ENCODE measurements at regions of chr10 and their contacts with region 1.

Region 1: DNA sequence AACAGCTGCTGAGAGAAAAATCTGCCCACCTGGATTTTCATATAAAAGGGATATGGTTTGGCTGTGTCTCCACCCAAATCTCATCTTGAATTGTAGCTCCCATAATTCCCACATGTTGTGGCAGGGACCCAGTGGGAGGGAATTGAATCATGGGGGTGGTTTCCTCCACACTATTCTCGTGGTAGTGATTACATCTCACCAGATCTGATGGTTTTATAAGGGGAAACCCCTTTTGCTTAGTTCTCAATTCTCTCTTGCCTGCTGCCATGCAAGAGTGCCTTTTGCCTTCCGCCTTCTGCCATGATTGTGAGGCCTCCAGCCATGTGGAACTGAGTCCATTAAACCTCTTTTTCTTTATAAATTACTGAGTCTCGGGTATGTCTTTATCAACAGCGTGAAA is 20.8 kb upstream of the MKI67 start:
- DNase-seq: no peak
- H3K4me3 ChIP-seq: no peak overlapping the region
- H3K27ac ChIP-seq: no peak overlapping the region
- H3K4me1 ChIP-seq: no peaks in the 10 kb centered on the region
- H3K27me3 ChIP-seq: no peaks in the 10 kb centered on the region
- CTCF ChIP-seq: no peak

Region 2: DNA sequence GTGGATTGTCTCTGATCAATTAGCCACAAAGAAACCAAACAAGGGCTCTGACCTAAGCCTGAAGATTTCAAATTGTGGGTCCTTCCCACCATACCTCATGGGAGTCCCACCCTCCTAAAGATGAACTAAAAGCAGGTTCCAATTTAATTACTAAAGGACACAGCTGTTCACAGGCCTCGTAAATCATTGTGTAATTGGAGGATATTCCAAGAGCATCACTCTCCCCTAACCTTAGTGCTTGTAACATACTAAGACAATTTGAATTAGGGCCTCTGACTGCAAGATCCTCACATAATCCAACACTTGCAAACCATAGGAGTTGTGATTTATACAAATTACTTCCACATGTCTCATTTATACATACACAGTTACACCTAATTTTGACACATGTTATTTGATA is 365.7 kb before region 1 on chr10:
- intact Hi-C with region 1: no loop called
- DNase-seq: no peak
- H3K4me3 ChIP-seq: no peak overlapping the region
- H3K27ac ChIP-seq: no peak overlapping the region
- H3K4me1 ChIP-seq: no peaks in the 10 kb centered on the region
- H3K27me3 ChIP-seq: no peaks in the 10 kb centered on the region
- CTCF ChIP-seq: no peak

Region 3: DNA sequence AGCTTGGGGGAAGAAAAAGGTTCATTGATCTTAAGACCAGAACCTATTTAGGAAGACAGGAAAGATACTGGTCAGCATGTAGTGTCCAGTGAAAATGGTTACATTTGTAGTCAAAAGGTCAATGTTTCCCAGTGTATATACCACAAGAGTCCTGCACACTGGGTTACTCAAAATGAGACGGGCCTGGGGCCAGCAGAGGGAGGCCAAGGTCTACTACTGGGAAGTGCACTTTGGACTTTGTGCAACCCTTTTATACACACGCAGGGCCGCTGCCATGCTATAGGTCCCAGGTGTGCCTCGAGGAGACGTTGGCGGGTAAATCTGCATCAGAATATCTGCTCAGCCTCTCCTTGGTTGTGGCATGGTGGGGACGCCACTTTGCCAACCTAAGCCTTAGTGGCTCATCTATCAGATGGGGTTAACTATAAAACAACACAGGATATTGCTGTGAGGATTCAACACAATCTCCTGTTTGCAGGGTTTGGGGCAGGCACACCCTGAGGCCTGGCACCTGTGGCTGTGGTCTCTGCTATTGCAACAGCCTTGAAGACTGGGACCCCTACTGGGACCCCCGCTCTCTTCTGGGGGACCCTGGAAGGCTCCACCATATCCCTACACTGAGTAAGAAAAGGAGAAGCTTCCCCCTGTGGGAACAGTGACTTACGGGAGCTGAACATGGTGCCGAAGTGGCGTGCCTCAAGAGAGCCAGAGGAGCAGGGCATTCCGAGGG is 274.0 kb before region 1 on chr10:
- intact Hi-C with region 1: loop called (anchors 10 kb)
- DNase-seq: peak; percentile 85
- H3K4me3 ChIP-seq: no peak overlapping the region
- H3K27ac ChIP-seq: no peak overlapping the region
- H3K4me1 ChIP-seq: no peaks in the 10 kb centered on the region
- H3K27me3 ChIP-seq: no peaks in the 10 kb centered on the region
- CTCF ChIP-seq: peak; percentile 59

Region 4: DNA sequence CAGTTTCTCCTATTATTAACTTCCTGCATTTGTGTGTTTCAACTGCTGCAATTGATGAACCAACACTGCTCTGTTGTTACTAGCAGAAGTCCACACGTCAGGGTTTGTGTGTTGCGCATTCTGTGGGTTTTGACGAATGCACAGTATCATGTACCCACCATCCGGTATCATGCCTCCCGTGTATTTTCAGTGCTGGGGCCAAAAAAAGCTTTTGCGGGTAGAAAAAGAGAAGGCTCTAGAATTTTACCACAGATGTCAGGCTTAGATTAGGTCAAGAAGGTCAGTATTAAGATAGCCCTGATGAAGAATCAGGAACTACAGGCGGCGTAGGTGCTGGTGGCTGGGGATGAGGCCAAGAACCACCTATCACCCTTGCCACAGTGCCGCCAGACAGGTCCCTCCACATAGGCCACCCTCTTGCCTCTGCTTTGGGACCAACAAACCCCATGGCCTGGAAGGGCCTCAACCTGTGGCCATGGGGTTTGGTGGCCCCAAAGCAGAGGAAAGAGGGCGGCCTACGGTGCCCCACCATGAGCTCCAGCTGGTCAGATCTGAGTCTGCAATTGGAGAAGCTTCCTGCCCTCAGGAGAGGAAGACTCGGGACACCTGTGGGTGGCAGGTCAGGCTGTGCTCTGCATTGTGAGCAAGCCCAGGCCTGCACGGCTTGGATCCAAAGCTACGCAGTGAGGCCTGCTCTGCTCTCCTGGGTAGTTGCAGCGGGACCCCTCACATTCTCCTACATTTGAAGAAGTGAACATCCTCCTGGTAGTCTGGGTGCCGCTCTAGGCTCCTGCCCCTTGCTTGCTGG is 92.7 kb before region 1 on chr10:
- intact Hi-C with region 1: no loop called
- DNase-seq: no peak
- H3K4me3 ChIP-seq: no peak overlapping the region
- H3K27ac ChIP-seq: no peak overlapping the region
- H3K4me1 ChIP-seq: no peaks in the 10 kb centered on the region
- H3K27me3 ChIP-seq: no peaks in the 10 kb centered on the region
- CTCF ChIP-seq: no peak

Region 5: GRCh38 chr10:128078136-128078969 is 68.7 kb before region 1 on chr10:
- intact Hi-C with region 1: loop called (anchors 5 kb)
- DNase-seq: peak; percentile 43
- H3K4me3 ChIP-seq: no peak overlapping the region
- H3K27ac ChIP-seq: no peak overlapping the region
- H3K4me1 ChIP-seq: no peaks in the 10 kb centered on the region
- H3K27me3 ChIP-seq: no peaks in the 10 kb centered on the region
- CTCF ChIP-seq: peak; percentile 58

Measured in colonic mucosa (tissue), 4 donors.